ENCODE measurements at regions of chr17 and their contacts with region 1.

Region 1: GRCh38 chr17:30970831-30971567 is at the start of gene RNF135:
- DNase-seq: peak; percentile 71

Region 2: DNA sequence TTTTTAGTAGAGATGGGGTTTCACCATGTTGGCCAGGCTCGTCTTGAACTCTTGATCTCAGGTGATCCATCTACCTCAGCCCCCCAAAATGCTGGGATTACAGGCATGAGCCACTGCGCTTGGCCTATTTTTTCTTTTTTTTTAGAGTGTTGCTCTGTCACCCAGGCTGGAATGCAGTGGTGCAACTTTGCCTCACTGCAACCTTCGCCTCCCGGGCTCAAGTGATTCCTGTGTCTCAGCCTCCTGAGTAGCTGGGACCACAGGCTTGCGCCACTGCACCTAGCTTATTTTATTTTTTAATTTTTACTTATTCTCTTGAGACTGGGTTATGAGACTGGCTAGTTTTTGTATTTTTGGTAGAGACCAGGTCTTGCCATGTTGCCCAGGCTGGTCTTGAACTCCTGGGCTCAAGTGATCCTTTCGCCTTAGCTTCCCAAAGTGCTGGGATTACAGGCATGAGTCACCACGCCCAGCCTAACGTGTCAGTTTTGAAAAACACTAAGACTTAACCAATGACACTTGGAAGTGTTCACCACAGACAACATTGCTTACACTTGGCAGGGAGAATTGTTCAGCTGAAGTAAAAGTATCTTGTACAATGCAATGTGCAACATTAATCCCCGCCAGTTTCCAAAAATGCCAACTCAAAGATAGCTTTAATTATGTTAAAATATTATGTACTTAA is 112.3 kb before region 1 on chr17:
- CTCF ChIA-PET with region 1: no interaction called
- POLR2A ChIA-PET with region 1: no interaction called
- DNase-seq: no peak

Region 3: DNA sequence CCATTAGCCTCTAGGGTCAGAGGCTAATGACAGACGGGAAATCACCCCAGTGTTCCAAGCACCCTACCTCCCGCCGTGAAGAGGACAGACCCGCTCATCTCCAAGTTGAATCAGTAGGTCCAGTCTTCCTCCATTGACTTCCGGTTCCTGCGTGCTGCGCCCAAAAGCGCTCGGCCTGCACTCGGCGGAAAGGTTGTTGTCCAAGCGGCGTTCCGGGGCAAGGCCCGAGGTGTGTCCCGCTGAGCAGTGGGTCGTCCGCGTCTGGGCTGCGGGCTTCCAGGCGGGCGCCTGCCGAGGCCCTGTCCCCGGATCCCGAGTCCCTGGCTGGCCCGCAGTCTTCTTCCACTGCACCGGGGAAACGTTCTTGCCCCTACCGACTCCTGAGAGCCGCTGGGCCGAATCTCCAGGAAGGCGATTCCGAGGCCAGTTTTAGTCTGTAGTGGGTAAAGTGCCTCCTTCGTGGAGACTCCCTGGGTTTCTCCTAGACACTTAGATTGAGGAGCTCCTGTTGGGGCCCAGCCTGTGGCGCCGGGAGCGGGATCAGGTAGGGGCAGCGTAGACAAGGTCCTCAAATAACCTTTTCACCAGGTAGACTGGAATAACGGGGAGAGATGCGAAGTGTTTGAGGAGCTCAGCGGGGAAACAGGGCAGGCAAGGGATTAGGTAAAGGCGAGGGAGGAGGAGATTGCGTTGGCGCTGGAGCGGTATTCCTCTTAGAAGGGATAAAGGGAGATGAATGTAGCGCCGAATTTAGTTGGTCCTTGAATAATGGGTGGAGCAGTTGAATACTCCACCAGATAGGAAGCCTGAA is 64.7 kb before region 1 on chr17 and contains the start of gene TEFM:
- CTCF ChIA-PET with region 1: no interaction called
- POLR2A ChIA-PET with region 1: interaction called, 14 read pairs
- DNase-seq: peak; percentile 81

Region 4: GRCh38 chr17:30917050-30917449 is 53.9 kb before region 1 on chr17:
- CTCF ChIA-PET with region 1: no interaction called
- POLR2A ChIA-PET with region 1: no interaction called
- DNase-seq: no peak

Region 5: DNA sequence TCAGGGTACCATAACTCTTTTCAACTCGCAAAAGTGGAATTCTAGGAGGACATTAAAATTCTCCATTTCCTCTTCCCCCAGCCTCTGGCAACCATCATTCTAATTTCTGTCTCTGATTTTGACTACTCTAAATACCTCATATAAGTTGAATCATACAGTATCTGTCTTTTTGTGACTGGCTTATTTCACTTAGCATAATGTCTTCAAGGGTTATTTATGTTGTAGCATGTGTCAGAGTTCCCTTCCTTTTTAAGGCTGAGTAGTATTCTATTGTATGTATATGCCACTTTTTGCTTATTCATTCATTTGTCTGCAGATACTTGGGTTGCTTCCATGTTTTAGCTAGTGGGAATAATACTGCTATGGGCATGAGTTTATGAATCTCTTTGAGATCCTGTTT is 11.9 kb after region 1 on chr17:
- CTCF ChIA-PET with region 1: no interaction called
- POLR2A ChIA-PET with region 1: interaction called, 12 read pairs
- DNase-seq: no peak

Region 6: DNA sequence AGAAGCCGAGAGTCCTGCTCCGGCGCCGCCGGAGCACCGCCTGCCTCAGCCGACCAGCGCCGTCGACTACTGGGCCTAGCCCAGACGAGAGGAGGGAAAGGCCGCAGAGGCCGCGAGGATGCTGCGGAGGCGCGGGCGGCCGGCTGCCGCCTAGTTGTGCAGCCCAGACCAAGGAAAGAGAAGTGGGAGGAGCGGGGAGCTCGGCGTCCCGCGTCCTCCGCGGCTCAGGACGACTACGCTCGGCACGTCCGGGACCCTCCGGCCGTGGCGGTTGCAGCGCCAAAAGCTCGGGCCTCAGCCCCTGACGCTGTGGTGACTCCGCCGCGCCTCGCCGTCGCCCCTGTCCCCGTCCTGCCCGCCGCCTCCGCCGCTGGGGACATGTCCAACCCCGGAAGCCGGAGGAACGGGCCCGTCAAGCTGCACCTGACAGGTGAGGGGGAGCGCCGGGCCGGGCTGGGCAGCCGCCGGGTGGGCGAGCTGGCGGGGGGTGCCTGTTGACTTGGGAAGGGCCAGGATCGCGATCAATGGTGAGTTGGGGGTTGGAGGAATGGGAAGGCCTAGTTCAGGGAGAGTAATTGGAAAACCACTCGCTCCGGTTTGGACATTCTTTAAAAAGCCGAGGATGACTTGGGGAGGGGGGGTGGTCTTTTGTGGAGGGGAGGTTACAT is 37.5 kb after region 1 on chr17:
- CTCF ChIA-PET with region 1: no interaction called
- POLR2A ChIA-PET with region 1: interaction called, 16 read pairs
- DNase-seq: peak; percentile 41

Measured in HEK293T (cell line).